ENCODE measurements at regions of chr19 and their contacts with region 1.

Region 1: DNA sequence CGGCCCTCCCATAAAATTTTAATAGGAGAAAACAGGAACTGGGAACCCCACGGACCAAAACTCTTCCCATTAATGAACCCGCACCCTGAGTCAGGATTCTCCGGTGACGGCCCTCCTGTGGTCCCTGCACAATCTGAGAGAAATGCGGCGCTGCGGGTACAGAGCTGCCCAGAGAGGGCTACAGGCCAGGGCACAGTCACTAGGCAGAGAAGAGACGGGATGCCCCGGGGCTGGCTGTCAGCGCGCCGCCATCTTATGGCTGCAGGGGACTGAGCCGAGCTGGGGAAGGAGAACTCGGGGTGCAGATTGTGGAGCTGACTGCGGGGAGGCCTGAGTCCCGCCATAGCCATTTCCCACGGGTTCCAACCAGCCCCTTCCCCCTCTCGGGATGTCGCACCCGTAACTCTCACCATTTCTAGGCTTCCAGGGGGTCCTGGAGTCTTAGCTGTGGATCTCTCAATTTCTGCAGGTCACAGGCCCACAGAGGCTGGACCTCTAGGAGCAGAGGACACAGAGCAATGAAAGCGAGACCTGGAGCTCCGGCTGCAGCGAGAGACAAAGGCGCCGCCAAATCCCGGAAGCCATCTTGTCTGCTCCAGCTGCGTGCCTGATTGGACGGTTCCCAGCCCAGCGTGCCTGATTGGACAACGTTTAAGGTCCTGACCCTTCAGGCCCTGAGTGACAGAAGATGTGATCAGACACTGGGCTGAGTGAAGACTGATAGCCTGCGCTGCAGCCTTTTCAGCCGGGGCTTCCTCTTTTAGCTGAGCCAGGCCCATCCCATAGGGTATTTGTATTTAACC is at the start of gene ZNF675:
- DNase-seq: peak; percentile 95
- ATAC-seq: peak; percentile 97
- H3K4me3 Mint-ChIP-seq: peak within 1 kb of the TSS; percentile 98
- H3K27ac Mint-ChIP-seq: peak within 1 kb of the TSS; percentile 98
- H3K4me1 Mint-ChIP-seq: peaks cover 41% of the 10 kb centered on the region
- H3K27me3 Mint-ChIP-seq: no peaks in the 10 kb centered on the region
- total RNA-seq, gene ZNF675: 19.1 to 22.8 TPM

Region 2: GRCh38 chr19:22634450-22634827 is 1052.4 kb before region 1 on chr19:
- CTCF ChIA-PET with region 1: no interaction called
- POLR2A ChIA-PET with region 1: no interaction called
- intact Hi-C with region 1: loop called in 1 of 2 experiments (anchors 10 kb)
- DNase-seq: peak; percentile 36
- ATAC-seq: peak; percentile 28
- H3K4me3 Mint-ChIP-seq: peak overlapping the region; percentile 93
- H3K27ac Mint-ChIP-seq: peak overlapping the region; percentile 94
- H3K4me1 Mint-ChIP-seq: peaks cover 6% of the 10 kb centered on the region
- H3K27me3 Mint-ChIP-seq: no peaks in the 10 kb centered on the region

Region 3: DNA sequence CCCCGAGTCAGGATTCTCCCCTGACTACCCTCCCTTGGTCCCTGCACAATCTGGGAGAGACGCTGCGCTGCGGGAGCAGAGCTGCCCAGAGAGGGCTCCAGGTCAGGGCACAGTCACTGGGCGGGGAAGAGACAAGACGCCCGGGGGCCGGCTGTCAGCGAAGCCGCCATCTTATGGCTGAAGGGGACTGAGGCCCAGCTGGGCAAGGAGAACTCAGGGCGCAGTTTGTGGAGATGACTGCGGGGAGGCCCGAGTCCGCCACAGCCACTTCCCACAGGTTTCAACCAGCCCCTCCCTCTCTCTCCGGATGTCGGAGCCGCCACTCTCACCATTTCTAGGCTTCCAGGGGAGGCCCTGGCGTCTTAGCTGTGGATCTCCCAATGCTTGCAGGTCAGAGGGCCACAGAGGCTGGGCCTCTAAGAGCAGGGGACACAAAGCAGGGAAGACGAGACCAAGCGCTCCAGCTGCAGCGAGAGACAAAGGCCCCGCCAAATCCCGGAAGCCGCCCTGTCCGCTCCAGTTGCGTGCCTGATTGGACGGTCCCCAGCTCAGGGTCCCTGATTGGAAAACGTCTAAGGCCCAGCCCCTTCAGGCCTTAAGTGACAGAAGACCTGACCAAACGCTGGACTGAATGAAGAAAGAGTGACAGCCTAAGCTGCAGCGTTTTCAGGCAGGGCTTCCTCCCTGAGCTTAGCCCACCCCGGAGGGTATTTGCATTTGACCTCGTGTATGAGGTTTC is 436.7 kb before region 1 on chr19 and contains the start of gene ZNF724:
- CTCF ChIA-PET with region 1: no interaction called
- POLR2A ChIA-PET with region 1: no interaction called
- intact Hi-C with region 1: loop called in 1 of 2 experiments (anchors 10 kb)
- DNase-seq: peak; percentile 94
- ATAC-seq: peak; percentile 100
- H3K4me3 Mint-ChIP-seq: peak within 1 kb of the TSS; percentile 87
- H3K27ac Mint-ChIP-seq: peak within 1 kb of the TSS; percentile 96
- H3K4me1 Mint-ChIP-seq: peaks cover 12% of the 10 kb centered on the region
- H3K27me3 Mint-ChIP-seq: no peaks in the 10 kb centered on the region
- total RNA-seq, gene ZNF724: 15.1 to 19.1 TPM

Region 4: DNA sequence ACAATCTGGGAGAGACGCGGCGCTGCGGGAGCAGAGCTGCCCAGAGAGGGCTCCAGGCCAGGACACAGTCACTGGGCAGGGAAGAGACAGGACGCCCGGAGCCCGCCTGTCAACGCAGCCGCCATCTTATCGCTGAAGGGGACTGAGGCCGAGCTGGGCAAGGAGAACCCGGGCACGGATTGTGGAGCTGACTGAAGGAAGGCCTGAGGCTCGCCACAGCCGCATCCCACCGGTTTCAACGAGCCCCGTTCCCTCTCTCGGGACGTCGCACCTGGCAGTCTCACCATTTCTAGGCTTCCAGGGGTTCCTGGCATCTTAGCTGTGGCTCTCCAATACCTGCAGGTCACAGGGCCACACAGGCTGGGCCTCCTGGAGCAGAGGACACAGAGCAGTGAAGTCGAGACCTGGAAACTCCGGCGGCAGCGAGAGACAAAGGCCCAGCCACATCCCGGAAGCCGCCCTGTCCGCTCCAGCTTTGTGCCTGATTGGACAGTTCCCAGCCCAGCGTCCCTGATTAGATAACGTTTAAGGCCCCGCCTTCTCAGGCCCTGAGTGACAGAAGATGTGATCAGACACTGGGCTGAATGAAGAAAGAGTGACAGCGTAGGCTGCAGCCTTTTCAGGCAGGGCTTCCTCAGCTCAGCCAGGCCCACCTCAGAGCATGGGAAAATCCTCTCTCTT is 291.6 kb before region 1 on chr19 and contains the start of gene ZNF91:
- CTCF ChIA-PET with region 1: no interaction called
- POLR2A ChIA-PET with region 1: interaction called, 3 read pairs
- intact Hi-C with region 1: loop called (anchors 1 to 2 kb)
- DNase-seq: peak; percentile 96
- ATAC-seq: peak; percentile 96
- H3K4me3 Mint-ChIP-seq: peak within 1 kb of the TSS; percentile 98
- H3K27ac Mint-ChIP-seq: peak within 1 kb of the TSS; percentile 99
- H3K4me1 Mint-ChIP-seq: peaks cover 31% of the 10 kb centered on the region
- H3K27me3 Mint-ChIP-seq: no peaks in the 10 kb centered on the region
- total RNA-seq, gene ZNF91: 35.7 to 45.5 TPM

Region 5: GRCh38 chr19:23554558-23554957 is 132.3 kb before region 1 on chr19:
- CTCF ChIA-PET with region 1: no interaction called
- POLR2A ChIA-PET with region 1: no interaction called
- intact Hi-C with region 1: no loop called
- DNase-seq: no peak
- ATAC-seq: no peak
- H3K4me3 Mint-ChIP-seq: no peak overlapping the region
- H3K27ac Mint-ChIP-seq: no peak overlapping the region
- H3K4me1 Mint-ChIP-seq: no peaks in the 10 kb centered on the region
- H3K27me3 Mint-ChIP-seq: no peaks in the 10 kb centered on the region

Region 6: DNA sequence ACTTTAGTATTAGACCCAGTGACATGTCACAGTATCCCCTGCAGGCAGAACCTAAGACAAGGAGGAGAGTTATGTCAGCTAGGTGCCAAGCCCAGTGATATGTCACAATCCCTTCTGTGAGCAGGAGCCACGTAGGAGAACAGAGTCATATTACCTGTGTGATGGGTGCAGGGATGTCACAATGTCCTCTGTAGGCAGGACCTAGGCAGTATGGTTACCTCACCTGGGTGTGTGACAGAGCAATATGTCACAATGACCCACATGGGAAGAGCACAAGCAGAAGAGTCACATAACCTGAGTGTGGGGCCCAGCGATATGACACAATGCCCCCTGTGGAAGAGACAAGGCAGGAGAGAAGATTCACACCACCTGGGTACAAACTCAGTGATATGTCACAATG is 121.5 kb before region 1 on chr19:
- CTCF ChIA-PET with region 1: no interaction called
- POLR2A ChIA-PET with region 1: no interaction called
- intact Hi-C with region 1: no loop called
- DNase-seq: no peak
- ATAC-seq: no peak
- H3K4me3 Mint-ChIP-seq: no peak overlapping the region
- H3K27ac Mint-ChIP-seq: no peak overlapping the region
- H3K4me1 Mint-ChIP-seq: no peaks in the 10 kb centered on the region
- H3K27me3 Mint-ChIP-seq: no peaks in the 10 kb centered on the region

Region 7: DNA sequence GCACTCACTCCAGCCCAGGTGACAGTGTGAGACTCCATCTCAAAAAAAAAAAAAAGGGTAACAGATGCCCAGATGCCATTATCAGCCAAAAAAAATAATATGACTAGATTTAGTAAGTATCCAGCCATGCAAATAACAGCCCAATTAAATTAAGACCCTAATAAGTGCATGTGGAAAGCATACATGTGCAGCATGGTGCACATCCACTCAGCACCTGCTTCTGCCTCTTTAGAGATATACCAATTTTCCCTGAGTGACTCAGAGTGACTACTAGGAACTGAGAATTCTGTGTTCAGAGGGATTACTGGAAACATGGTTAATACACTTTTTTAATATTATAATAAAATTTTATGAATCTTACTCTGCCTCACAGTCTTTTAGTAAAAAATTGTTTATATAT is 30.0 kb after region 1 on chr19:
- CTCF ChIA-PET with region 1: no interaction called
- POLR2A ChIA-PET with region 1: no interaction called
- intact Hi-C with region 1: no loop called
- DNase-seq: no peak
- ATAC-seq: no peak
- H3K4me3 Mint-ChIP-seq: no peak overlapping the region
- H3K27ac Mint-ChIP-seq: no peak overlapping the region
- H3K4me1 Mint-ChIP-seq: peaks cover 9% of the 10 kb centered on the region
- H3K27me3 Mint-ChIP-seq: peaks cover 6% of the 10 kb centered on the region

Region 8: DNA sequence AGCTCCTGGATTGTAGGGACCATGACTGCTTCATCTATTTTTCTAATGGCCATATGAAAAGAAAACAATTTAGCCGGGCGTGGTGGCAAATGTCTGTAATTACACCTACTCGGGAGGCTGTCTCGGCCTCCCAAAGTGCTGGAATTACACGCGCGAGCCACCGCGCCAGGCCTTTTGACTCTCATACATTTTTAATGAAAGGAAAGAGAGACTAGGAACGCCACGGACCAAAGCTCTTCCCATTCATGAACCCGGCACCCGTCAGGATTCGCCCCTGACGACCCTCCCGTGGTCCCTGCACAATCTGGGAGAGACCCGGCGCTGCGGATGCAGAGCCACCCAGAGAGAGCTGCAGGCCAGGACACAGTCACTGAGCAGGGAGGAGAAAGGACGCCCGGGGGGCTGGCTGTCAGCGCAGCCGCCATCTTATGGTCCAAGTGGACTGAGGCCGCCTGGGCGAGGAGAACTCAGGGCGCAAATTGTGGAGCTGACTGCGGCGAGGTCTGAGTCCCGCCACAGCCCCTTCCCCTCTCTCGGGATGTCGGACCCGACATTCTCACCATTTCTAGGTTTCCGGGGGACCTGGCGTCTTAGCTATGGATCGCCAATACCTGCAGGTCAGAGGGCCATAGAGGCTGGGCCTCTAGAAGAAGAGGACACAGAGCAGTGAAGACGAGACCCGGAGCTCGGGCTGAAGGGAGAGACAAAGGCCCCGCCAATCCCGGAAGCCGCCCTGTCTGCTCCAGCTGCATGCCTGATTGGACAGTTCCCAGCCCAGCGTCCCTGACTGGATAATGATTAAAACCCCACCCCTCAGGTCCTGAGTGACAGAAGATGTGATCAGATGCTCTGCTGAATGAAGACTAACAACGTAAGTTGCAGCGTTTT is 71.6 kb after region 1 on chr19 and contains the start of gene ZNF681:
- CTCF ChIA-PET with region 1: interaction called, 9 read pairs
- POLR2A ChIA-PET with region 1: interaction called, 10 read pairs
- intact Hi-C with region 1: loop called (anchors 1 kb)
- DNase-seq: peak; percentile 94
- ATAC-seq: peak; percentile 93
- H3K4me3 Mint-ChIP-seq: peak within 1 kb of the TSS; percentile 95
- H3K27ac Mint-ChIP-seq: peak within 1 kb of the TSS; percentile 95
- H3K4me1 Mint-ChIP-seq: peaks cover 25% of the 10 kb centered on the region
- H3K27me3 Mint-ChIP-seq: no peaks in the 10 kb centered on the region
- total RNA-seq, gene ZNF681: 5.7 to 9.1 TPM

Region 9: DNA sequence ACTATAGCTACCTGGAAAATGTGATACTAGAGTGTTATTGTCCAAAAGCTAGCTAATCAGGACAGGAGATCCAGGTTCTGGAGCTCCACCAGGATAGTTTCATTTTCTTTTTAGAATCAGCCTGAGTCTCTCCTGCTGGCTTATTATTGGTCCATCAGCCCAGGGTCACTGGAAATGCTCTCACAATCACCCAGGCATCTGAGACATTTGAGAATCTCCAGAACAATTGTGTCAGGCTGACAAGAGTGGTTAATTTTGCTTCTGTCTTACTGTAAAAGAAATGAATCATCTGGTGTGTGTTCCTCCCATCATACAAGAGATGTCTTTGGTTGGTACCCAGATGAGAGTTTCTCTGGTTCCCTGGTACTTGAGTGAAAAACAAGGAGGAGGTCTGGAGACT is 115.5 kb after region 1 on chr19:
- CTCF ChIA-PET with region 1: no interaction called
- POLR2A ChIA-PET with region 1: no interaction called
- intact Hi-C with region 1: loop called in 1 of 2 experiments (anchors 5 kb)
- DNase-seq: peak; percentile 14
- ATAC-seq: peak; percentile 74
- H3K4me3 Mint-ChIP-seq: peak overlapping the region; percentile 42
- H3K27ac Mint-ChIP-seq: peak overlapping the region; percentile 82
- H3K4me1 Mint-ChIP-seq: peaks cover 29% of the 10 kb centered on the region
- H3K27me3 Mint-ChIP-seq: no peaks in the 10 kb centered on the region

Region 10: DNA sequence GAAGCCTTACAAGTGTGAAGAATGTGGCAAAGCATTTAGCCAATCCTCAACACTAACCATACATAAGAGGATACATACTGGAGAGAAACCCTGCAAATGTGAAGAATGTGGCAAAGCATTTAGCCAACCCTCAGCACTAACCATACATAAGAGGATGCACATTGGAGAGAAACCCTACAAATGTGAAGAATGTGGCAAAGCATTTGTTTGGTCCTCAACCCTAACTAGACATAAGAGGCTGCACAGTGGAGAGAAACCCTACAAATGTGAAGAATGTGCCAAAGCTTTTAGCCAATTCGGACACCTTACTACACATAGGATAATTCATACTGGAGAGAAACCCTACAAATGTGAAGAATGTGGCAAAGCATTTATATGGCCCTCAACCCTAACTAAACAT is 246.1 kb after region 1 on chr19:
- CTCF ChIA-PET with region 1: no interaction called
- POLR2A ChIA-PET with region 1: no interaction called
- intact Hi-C with region 1: no loop called
- DNase-seq: no peak
- ATAC-seq: no peak
- H3K4me3 Mint-ChIP-seq: no peak overlapping the region
- H3K27ac Mint-ChIP-seq: no peak overlapping the region
- H3K4me1 Mint-ChIP-seq: no peaks in the 10 kb centered on the region
- H3K27me3 Mint-ChIP-seq: no peaks in the 10 kb centered on the region

Region 11: GRCh38 chr19:24086974-24087595 is 400.3 kb after region 1 on chr19 and contains the start of gene ZNF254:
- CTCF ChIA-PET with region 1: no interaction called
- POLR2A ChIA-PET with region 1: no interaction called
- intact Hi-C with region 1: loop called (anchors 2 to 10 kb)
- DNase-seq: peak; percentile 93
- ATAC-seq: peak; percentile 100
- H3K4me3 Mint-ChIP-seq: peak within 1 kb of the TSS; percentile 94
- H3K27ac Mint-ChIP-seq: peak within 1 kb of the TSS; percentile 97
- H3K4me1 Mint-ChIP-seq: peaks cover 6% of the 10 kb centered on the region
- H3K27me3 Mint-ChIP-seq: no peaks in the 10 kb centered on the region
- total RNA-seq, gene ZNF254: 8.8 to 9.6 TPM

Measured in activated CD4-positive, alpha-beta T cell treated with anti-CD3 and anti-CD28 coated beads for 36 hours (primary cell).